ENCODE measurements at regions of chr9 and their contacts with region 1.

Region 1: GRCh38 chr9:97598461-97599288 is 34.5 kb downstream of the TSTD2 start:
- DNase-seq: peak; percentile 86
- H3K4me3 Mint-ChIP-seq: no peak overlapping the region
- H3K27ac Mint-ChIP-seq: no peak overlapping the region
- H3K4me1 Mint-ChIP-seq: peaks cover 9% of the 10 kb centered on the region
- H3K27me3 Mint-ChIP-seq: no peaks in the 10 kb centered on the region

Region 2: GRCh38 chr9:97411789-97412625 is 186.7 kb before region 1 on chr9 and contains the start of gene TDRD7:
- CTCF ChIA-PET with region 1: interaction called, 17 read pairs
- POLR2A ChIA-PET with region 1: no interaction called
- DNase-seq: peak; percentile 87
- H3K4me3 Mint-ChIP-seq: peak within 1 kb of the TSS; percentile 85
- H3K27ac Mint-ChIP-seq: peak within 1 kb of the TSS; percentile 52
- H3K4me1 Mint-ChIP-seq: peaks cover 34% of the 10 kb centered on the region
- H3K27me3 Mint-ChIP-seq: peaks cover 35% of the 10 kb centered on the region
- total RNA-seq, gene TDRD7: 18.1 to 19.5 TPM

Region 3: DNA sequence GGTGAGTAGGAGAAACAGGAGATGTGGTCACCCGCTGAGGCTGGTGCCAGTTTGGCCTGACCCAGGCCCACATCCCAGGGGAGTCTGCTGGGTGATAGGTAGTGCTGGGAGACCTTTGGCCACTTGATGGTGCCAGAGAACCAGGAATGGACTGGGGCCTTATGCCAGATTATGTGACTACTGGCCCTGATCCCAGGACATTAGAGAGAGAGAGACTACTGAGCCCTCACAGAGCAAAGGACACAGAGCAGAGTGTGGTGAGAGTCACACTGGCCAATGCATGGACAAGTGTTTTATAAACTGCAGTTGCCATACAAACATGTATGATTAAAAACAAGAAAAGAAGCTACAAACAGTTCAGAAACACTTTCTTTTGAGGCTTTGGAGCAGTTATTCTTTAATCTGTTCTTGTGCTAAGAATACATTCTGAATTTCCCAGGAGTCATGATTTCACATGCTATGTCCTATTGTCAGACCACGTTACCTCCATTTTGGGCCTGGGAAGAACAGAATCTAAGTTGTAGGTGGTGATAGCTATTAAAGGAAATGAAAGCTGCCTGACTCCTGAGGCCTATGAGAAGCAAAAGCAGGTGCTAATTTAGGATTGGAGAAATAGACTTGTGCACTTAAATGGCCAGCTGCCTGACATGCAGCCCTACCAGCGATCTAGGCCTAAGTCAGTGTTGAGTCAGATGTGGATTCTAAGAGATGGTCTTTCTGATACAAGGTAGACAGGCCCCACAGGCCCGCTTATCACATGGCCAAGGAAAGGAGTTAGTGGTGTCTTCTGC is 129.8 kb before region 1 on chr9:
- CTCF ChIA-PET with region 1: interaction called, 13 read pairs
- POLR2A ChIA-PET with region 1: no interaction called
- DNase-seq: peak; percentile 42
- H3K4me3 Mint-ChIP-seq: no peak overlapping the region
- H3K27ac Mint-ChIP-seq: no peak overlapping the region
- H3K4me1 Mint-ChIP-seq: no peaks in the 10 kb centered on the region
- H3K27me3 Mint-ChIP-seq: no peaks in the 10 kb centered on the region

Region 4: GRCh38 chr9:97501177-97501971 is 97.3 kb before region 1 on chr9 and contains the start of gene TMOD1:
- CTCF ChIA-PET with region 1: interaction called, 11 read pairs
- POLR2A ChIA-PET with region 1: no interaction called
- DNase-seq: peak; percentile 27
- H3K4me3 Mint-ChIP-seq: peak within 1 kb of the TSS; percentile 65
- H3K27ac Mint-ChIP-seq: no peak within 1 kb of the TSS
- H3K4me1 Mint-ChIP-seq: peaks cover 19% of the 10 kb centered on the region
- H3K27me3 Mint-ChIP-seq: peaks cover 53% of the 10 kb centered on the region
- total RNA-seq, gene TMOD1: 0.35 to 0.45 TPM

Region 5: DNA sequence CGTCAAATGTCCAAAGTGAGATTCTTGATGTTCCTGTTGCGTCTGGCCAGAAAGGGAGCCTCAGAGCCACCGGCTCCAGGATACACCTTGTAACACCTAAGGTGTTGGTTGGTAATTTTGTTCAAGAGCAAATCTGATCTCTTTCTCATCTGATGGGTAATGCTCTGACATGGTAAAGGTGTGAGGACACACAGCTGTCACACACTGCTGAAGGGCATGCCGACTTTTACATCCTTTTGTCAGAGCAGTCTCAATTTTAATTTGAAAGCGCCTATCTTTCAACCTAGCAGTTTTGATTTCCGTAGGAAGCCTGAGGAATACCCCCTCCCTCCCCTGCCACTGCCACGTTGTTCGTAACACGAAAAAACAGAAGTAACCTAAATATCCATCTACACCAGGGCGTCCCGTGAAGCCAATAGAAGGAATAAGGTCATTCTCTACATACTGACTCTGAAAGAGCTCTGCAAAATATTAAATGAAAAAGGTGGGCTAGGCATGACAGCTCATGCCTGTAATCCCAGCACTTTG is 22.9 kb before region 1 on chr9:
- CTCF ChIA-PET with region 1: interaction called, 13 read pairs
- POLR2A ChIA-PET with region 1: no interaction called
- DNase-seq: no peak
- H3K4me3 Mint-ChIP-seq: no peak overlapping the region
- H3K27ac Mint-ChIP-seq: no peak overlapping the region
- H3K4me1 Mint-ChIP-seq: peaks cover 16% of the 10 kb centered on the region
- H3K27me3 Mint-ChIP-seq: no peaks in the 10 kb centered on the region

Region 6: GRCh38 chr9:97632985-97633858 is 34.5 kb after region 1 on chr9 and contains the starts of genes NCBP1 and TSTD2:
- CTCF ChIA-PET with region 1: interaction called, 10 read pairs
- POLR2A ChIA-PET with region 1: no interaction called
- DNase-seq: peak; percentile 96
- H3K4me3 Mint-ChIP-seq: peak within 1 kb of the TSS; percentile 93
- H3K27ac Mint-ChIP-seq: peak within 1 kb of the TSS; percentile 100
- H3K4me1 Mint-ChIP-seq: peaks cover 55% of the 10 kb centered on the region
- H3K27me3 Mint-ChIP-seq: no peaks in the 10 kb centered on the region
- total RNA-seq, gene NCBP1: 42.4 to 51.1 TPM
- total RNA-seq, gene TSTD2: 14.1 to 17.2 TPM